HepG2 (cell line): ENCODE measurements at regions of chr4 and their contacts with region 1.

Region 1: GRCh38 chr4:141196227-141196933 is 24.3 kb upstream of the ZNF330 start:
- DNase-seq: no peak
- ATAC-seq: no peak
- H3K4me3 ChIP-seq: no peak overlapping the region
- H3K27ac ChIP-seq: no peak overlapping the region
- H3K4me1 ChIP-seq: no peaks in the 10 kb centered on the region
- H3K27me3 ChIP-seq: no peaks in the 10 kb centered on the region
- CTCF ChIP-seq: no peak
- EP300 ChIP-seq: no peak
- POLR2A ChIP-seq: no peak
- RAD21 ChIP-seq: no peak

Region 2: GRCh38 chr4:141020801-141021261 is 175.5 kb before region 1 on chr4:
- CTCF ChIA-PET with region 1: no interaction called
- POLR2A ChIA-PET with region 1: no interaction called
- in situ Hi-C with region 1: no loop called
- intact Hi-C with region 1: no loop called
- DNase-seq: no peak
- ATAC-seq: no peak
- H3K4me3 ChIP-seq: no peak overlapping the region
- H3K27ac ChIP-seq: no peak overlapping the region
- H3K4me1 ChIP-seq: no peaks in the 10 kb centered on the region
- H3K27me3 ChIP-seq: no peaks in the 10 kb centered on the region; a peak in 1 of 5 replicates
- CTCF ChIP-seq: no peak
- EP300 ChIP-seq: no peak
- POLR2A ChIP-seq: no peak
- RAD21 ChIP-seq: no peak

Region 3: DNA sequence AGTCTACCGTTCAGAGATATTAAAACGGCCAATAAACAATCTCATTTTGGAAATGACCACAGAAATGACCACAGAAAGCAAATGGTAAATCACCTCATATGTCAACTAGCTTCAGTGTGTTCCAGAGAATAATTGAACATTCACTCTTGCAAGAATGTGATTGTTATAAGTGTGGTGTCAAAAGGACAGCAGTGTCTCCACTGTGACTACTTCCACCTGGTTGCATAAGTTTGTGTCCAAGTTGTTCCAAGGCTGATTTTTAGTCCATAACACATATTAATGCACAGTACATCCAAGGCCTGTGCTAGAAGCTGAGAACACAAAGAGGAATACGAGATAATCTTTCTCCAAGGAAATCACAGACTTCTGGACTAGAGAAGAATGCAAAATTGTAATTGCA is 25.7 kb before region 1 on chr4:
- CTCF ChIA-PET with region 1: no interaction called
- POLR2A ChIA-PET with region 1: no interaction called
- in situ Hi-C with region 1: no loop called
- intact Hi-C with region 1: loop called (anchors 2 kb)
- DNase-seq: no peak
- ATAC-seq: no peak
- H3K4me3 ChIP-seq: no peak overlapping the region
- H3K27ac ChIP-seq: no peak overlapping the region
- H3K4me1 ChIP-seq: no peaks in the 10 kb centered on the region
- H3K27me3 ChIP-seq: no peaks in the 10 kb centered on the region
- CTCF ChIP-seq: no peak
- EP300 ChIP-seq: no peak
- POLR2A ChIP-seq: no peak
- RAD21 ChIP-seq: no peak

Region 4: GRCh38 chr4:141248029-141248428 is 51.6 kb after region 1 on chr4:
- CTCF ChIA-PET with region 1: no interaction called
- POLR2A ChIA-PET with region 1: no interaction called
- in situ Hi-C with region 1: no loop called
- intact Hi-C with region 1: loop called (anchors 2 kb)
- DNase-seq: no peak
- ATAC-seq: no peak
- H3K4me3 ChIP-seq: no peak overlapping the region
- H3K27ac ChIP-seq: no peak overlapping the region
- H3K4me1 ChIP-seq: no peaks in the 10 kb centered on the region
- H3K27me3 ChIP-seq: no peaks in the 10 kb centered on the region
- CTCF ChIP-seq: no peak
- EP300 ChIP-seq: no peak
- POLR2A ChIP-seq: no peak
- RAD21 ChIP-seq: no peak